K562 (cell line): ENCODE measurements at regions of chrX and their contacts with region 1.

Region 1: GRCh38 chrX:15653961-15654360 is 10.6 kb downstream of the CLTRN start:
- DNase-seq: no peak
- ATAC-seq: no peak
- H3K4me3 ChIP-seq: no peak overlapping the region
- H3K27ac ChIP-seq: no peak overlapping the region
- H3K4me1 ChIP-seq: no peaks in the 10 kb centered on the region
- H3K27me3 ChIP-seq: no peaks in the 10 kb centered on the region
- CTCF ChIP-seq: no peak
- EP300 ChIP-seq: no peak
- POLR2A ChIP-seq: no peak
- RAD21 ChIP-seq: no peak

Region 2: GRCh38 chrX:15349046-15349445 is 304.9 kb before region 1 on chrX:
- CTCF ChIA-PET with region 1: no interaction called
- POLR2A ChIA-PET with region 1: no interaction called
- in situ Hi-C with region 1: no loop called
- intact Hi-C with region 1: loop called (anchors 10 kb)
- DNase-seq: peak; percentile 13 to 69 (median 22)
- ATAC-seq: peak; percentile 92
- H3K4me3 ChIP-seq: no peak overlapping the region
- H3K27ac ChIP-seq: no peak overlapping the region
- H3K4me1 ChIP-seq: no peaks in the 10 kb centered on the region
- H3K27me3 ChIP-seq: peaks cover 0 to 2% of the 10 kb centered on the region in 2 experiments; a peak in 2 of 5 replicates
- CTCF ChIP-seq: peak; percentile 50 to 70 (median 57)
- EP300 ChIP-seq: no peak
- POLR2A ChIP-seq: no peak
- RAD21 ChIP-seq: peak; percentile 65 to 78

Region 3: GRCh38 chrX:15781961-15782699 is 128.2 kb after region 1 on chrX:
- CTCF ChIA-PET with region 1: no interaction called
- POLR2A ChIA-PET with region 1: no interaction called
- in situ Hi-C with region 1: no loop called
- intact Hi-C with region 1: no loop called
- DNase-seq: no peak
- ATAC-seq: no peak
- H3K4me3 ChIP-seq: no peak overlapping the region
- H3K27ac ChIP-seq: no peak overlapping the region
- H3K4me1 ChIP-seq: no peaks in the 10 kb centered on the region
- H3K27me3 ChIP-seq: no peaks in the 10 kb centered on the region
- CTCF ChIP-seq: no peak
- EP300 ChIP-seq: no peak
- POLR2A ChIP-seq: no peak
- RAD21 ChIP-seq: no peak